Activated CD4-positive, alpha-beta T cell treated with anti-CD3 and anti-CD28 coated beads for 36 hours (primary cell): ENCODE measurements at regions of chr14 and their contacts with region 1.

Region 1: GRCh38 chr14:65206448-65207096 is 104.3 kb upstream of the MAX start:
- DNase-seq: peak; percentile 51
- ATAC-seq: peak; percentile 84
- H3K4me3 Mint-ChIP-seq: peak overlapping the region; percentile 55
- H3K27ac Mint-ChIP-seq: peak overlapping the region; percentile 82
- H3K4me1 Mint-ChIP-seq: peaks cover 59% of the 10 kb centered on the region
- H3K27me3 Mint-ChIP-seq: no peaks in the 10 kb centered on the region

Region 2: DNA sequence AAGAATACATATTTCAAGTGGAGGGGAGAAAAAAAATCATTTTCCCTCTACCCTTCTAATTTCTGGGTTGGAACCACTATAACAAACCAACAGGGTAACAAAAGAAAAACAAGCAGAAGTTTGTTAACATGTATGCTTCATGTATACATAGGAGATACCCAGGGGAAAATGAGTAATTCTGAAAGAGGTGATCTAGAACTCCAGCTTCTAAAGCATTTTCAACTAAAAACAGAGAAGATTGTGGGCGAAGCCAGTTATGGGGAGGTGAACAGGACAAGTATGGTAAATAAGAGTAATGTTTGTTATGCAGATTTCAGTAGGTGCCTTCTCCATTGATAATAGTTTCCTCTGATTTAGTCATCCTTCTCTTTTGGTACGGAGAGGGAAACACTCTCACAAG is 203.2 kb before region 1 on chr14:
- CTCF ChIA-PET with region 1: no interaction called
- POLR2A ChIA-PET with region 1: no interaction called
- intact Hi-C with region 1: loop called in 1 of 2 experiments (anchors 5 kb)
- DNase-seq: no peak
- ATAC-seq: peak; percentile 86
- H3K4me3 Mint-ChIP-seq: no peak overlapping the region
- H3K27ac Mint-ChIP-seq: peak overlapping the region; percentile 35
- H3K4me1 Mint-ChIP-seq: peaks cover 46% of the 10 kb centered on the region
- H3K27me3 Mint-ChIP-seq: no peaks in the 10 kb centered on the region

Region 3: DNA sequence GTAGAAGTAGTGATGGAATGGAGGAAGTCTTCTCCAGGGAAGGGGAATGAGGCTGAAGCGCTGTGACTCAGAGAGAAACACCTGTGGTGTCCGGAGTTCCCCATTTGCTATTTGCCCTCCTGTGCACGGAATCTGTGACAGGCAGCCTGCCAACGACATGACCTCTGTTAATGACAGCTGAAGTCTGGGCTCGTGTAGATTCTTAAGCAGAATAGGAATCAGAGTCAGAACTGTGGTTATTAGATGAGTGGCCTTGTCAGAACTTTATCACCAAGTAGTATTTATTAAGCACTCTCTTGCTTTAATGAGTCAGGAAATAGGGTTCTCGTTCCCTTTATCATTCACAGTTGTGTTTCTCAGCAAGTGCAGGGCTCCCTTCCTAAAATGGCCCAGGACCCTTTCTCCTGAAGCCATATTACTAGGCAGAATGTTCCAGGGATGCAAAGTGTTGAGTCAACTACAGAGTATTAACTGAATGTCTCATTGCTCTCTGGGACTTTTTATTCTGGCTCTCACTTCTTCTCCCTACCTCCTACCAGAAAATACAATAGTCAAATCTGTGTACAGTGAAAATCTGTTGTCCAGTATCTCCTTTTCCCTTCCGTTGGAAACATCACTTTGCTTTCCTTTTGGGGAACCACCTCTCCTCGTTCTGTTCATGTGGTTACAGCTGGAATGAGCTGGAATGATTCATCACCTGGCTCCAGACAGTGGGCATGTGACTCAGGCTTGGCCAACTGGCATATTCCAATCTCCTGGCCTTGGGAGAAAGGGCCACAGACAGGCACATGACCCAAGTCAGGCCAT is 26.5 kb before region 1 on chr14:
- CTCF ChIA-PET with region 1: no interaction called
- POLR2A ChIA-PET with region 1: no interaction called
- intact Hi-C with region 1: loop called (anchors 1 kb)
- DNase-seq: peak; percentile 79
- ATAC-seq: peak; percentile 89
- H3K4me3 Mint-ChIP-seq: no peak overlapping the region
- H3K27ac Mint-ChIP-seq: peak overlapping the region; percentile 23
- H3K4me1 Mint-ChIP-seq: peaks cover 16% of the 10 kb centered on the region
- H3K27me3 Mint-ChIP-seq: peaks cover 2% of the 10 kb centered on the region

Region 4: GRCh38 chr14:65231286-65231980 is 24.9 kb after region 1 on chr14:
- CTCF ChIA-PET with region 1: no interaction called
- POLR2A ChIA-PET with region 1: no interaction called
- intact Hi-C with region 1: no loop called
- DNase-seq: no peak
- ATAC-seq: no peak
- H3K4me3 Mint-ChIP-seq: no peak overlapping the region
- H3K27ac Mint-ChIP-seq: no peak overlapping the region
- H3K4me1 Mint-ChIP-seq: peaks cover 31% of the 10 kb centered on the region
- H3K27me3 Mint-ChIP-seq: no peaks in the 10 kb centered on the region

Region 5: GRCh38 chr14:65336191-65336591 is 129.6 kb after region 1 on chr14:
- CTCF ChIA-PET with region 1: no interaction called
- POLR2A ChIA-PET with region 1: no interaction called
- intact Hi-C with region 1: loop called (anchors 2 kb)
- DNase-seq: peak; percentile 72
- ATAC-seq: peak; percentile 89
- H3K4me3 Mint-ChIP-seq: peak overlapping the region; percentile 74
- H3K27ac Mint-ChIP-seq: peak overlapping the region; percentile 95
- H3K4me1 Mint-ChIP-seq: peaks cover 55% of the 10 kb centered on the region
- H3K27me3 Mint-ChIP-seq: no peaks in the 10 kb centered on the region

Region 6: GRCh38 chr14:65927931-65928356 is 721.4 kb after region 1 on chr14:
- CTCF ChIA-PET with region 1: interaction called, 4 read pairs
- POLR2A ChIA-PET with region 1: no interaction called
- intact Hi-C with region 1: loop called in 1 of 2 experiments (anchors 1 kb)
- DNase-seq: peak; percentile 93
- ATAC-seq: peak; percentile 96
- H3K4me3 Mint-ChIP-seq: no peak overlapping the region
- H3K27ac Mint-ChIP-seq: peak overlapping the region; percentile 59
- H3K4me1 Mint-ChIP-seq: peaks cover 39% of the 10 kb centered on the region
- H3K27me3 Mint-ChIP-seq: peaks cover 5% of the 10 kb centered on the region